ENCODE measurements at regions of chr10 and their contacts with region 1.

Region 1: DNA sequence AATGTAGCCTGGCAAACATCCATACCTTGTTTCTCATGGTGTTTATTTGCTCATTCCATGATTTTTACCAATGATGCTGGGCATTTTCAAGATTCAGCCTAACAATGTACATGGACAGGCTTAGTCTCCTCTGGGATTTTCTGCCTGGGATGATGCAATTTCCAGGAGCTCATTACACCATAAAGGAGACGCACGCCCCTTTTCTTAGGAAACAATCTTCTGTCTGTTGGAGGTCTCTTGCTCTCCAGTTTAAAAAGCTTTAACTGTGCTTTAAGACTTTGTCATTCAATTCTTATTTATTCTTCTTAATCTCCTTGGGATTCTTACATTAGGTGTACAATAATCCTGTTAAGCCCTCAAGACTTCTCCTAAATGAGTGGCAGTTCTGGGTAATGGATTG is 150.3 kb upstream of the NRP1 start:
- DNase-seq: no peak

Region 2: GRCh38 chr10:33334805-33335550 is 149.8 kb before region 1 on chr10:
- CTCF ChIA-PET with region 1: interaction called, 5 read pairs
- POLR2A ChIA-PET with region 1: interaction called, 11 read pairs
- DNase-seq: peak; percentile 45

Measured in HEK293T (cell line).